ENCODE measurements at regions of chr15 and their contacts with region 1.

Region 1: GRCh38 chr15:22811640-22812039 is 25.2 kb downstream of the NIPA1 start:
- DNase-seq: peak; percentile 63 to 91 (median 82)
- H3K4me3 ChIP-seq: no peak overlapping the region
- H3K27ac ChIP-seq: no peak overlapping the region
- H3K4me1 ChIP-seq: no peaks in the 10 kb centered on the region
- H3K27me3 ChIP-seq: no peaks in the 10 kb centered on the region
- CTCF ChIP-seq: peak; percentile 12 to 62 (median 57)
- POLR2A ChIP-seq: no peak

Region 2: GRCh38 chr15:22866079-22866478 is 54.4 kb after region 1 on chr15:
- intact Hi-C with region 1: loop called in 1 of 2 experiments (anchors 10 kb)
- DNase-seq: no peak
- H3K4me3 ChIP-seq: no peak overlapping the region
- H3K27ac ChIP-seq: no peak overlapping the region
- H3K4me1 ChIP-seq: peaks cover 8 to 10% of the 10 kb centered on the region in 2 donors
- H3K27me3 ChIP-seq: no peaks in the 10 kb centered on the region
- CTCF ChIP-seq: no peak
- POLR2A ChIP-seq: no peak

Region 3: DNA sequence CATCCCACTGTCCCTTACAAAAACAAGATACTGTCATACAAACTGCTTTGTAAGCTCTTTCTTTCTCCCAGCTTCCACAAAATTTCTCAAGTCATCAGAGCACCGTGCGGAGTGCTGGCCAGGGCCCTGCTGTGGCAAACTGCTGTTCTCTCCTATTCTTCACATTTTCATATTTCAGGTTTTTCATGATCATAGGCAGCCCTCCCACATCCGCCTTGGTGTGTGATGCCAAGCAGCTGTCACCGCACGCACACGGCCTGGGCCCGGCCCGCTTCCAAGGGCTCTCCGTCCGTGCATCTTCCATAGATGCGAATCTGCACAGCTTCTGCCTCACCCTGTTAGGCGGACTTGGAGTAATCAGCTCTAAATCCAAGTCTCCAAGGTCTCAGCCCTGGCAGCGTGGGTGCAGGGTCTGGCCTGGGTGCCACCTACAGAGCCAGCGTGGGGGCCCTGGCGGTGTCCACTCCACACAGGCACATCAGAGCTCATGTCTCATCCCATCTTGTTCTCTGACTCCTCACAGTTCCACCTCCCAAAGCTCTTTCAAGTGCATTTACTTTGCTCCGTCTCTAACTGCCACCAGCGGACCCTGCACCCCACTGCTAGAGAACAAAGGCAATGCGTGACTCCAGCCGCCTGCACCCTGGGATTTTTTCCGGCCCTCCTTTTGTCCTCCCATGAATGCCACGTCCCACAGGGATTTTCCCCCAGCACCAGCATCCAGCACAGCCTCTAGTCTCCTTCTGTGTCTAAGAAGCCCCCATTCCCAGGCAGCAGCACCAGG is 141.3 kb after region 1 on chr15:
- intact Hi-C with region 1: no loop called
- DNase-seq: no peak
- H3K4me3 ChIP-seq: no peak overlapping the region
- H3K27ac ChIP-seq: peak overlapping the region in 2 of 5 donors; percentile 30 to 34
- H3K4me1 ChIP-seq: peaks cover 15 to 75% of the 10 kb centered on the region in 2 donors
- H3K27me3 ChIP-seq: no peaks in the 10 kb centered on the region
- CTCF ChIP-seq: no peak
- POLR2A ChIP-seq: no peak

Measured in adrenal gland (tissue), 19 donors.